ENCODE measurements at regions of chr18 and their contacts with region 1.

Region 1: GRCh38 chr18:34322365-34323289 is 97.9 kb upstream of the NOL4 start:
- ATAC-seq: peak in 4 of 8 experiments; percentile 27 to 63 (median 60)
- H3K4me3 ChIP-seq: no peak overlapping the region
- H3K27ac ChIP-seq: no peak overlapping the region
- H3K4me1 ChIP-seq: peaks cover 0 to 5% of the 10 kb centered on the region in 2 donors

Region 2: DNA sequence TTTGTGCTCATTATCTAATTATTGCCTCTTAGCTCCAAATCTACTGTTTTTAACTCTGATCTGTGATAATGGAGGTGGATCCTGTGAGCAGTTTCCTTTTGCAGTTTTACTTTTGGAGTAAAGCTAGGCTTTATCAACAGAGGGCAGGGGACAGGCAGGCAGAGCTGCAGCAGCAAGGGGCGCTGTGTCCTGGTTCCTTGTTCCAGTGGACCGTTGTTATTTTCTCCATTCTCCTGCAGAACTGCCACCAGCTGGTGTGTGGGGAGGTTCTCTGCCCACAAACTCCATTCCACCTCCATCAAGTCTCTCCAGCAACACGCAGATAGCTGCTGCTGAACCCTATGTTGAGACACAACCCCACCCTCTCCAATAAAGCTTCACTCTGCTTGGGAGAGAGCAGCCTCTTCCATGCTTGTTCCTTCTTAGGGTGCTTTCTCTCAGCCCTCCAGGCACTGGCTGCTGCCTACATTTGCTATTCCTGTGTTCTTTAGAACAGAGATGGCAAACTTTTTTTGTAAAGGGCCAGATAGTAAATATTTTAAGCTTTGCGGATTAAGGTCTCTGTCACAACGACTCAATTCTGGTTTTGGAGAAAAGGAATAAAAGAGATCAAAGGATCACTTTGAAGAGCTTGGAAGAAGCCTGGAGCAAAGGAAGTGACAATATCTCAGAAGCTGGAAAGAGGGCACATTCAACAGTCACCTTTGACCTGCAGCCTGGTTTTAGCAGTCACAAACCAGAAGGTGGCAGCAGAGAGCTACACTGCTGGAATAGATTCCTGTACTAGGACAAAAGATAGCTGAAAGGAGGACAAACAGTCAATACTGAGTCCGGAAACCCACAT is 1090.9 kb before region 1 on chr18:
- in situ Hi-C with region 1: loop called in 1 of 9 experiments (anchors 25 kb)
- ATAC-seq: peak; percentile 58 to 86 (median 79)
- H3K4me3 ChIP-seq: no peak overlapping the region
- H3K27ac ChIP-seq: no peak overlapping the region
- H3K4me1 ChIP-seq: peaks cover 0 to 3% of the 10 kb centered on the region in 2 donors

Region 3: GRCh38 chr18:33839441-33840211 is 483.0 kb before region 1 on chr18:
- in situ Hi-C with region 1: loop called in 1 of 9 experiments (anchors 25 kb)
- ATAC-seq: peak in 4 of 8 experiments; percentile 24 to 62 (median 34)
- H3K4me3 ChIP-seq: no peak overlapping the region
- H3K27ac ChIP-seq: no peak overlapping the region
- H3K4me1 ChIP-seq: no peaks in the 10 kb centered on the region

Region 4: DNA sequence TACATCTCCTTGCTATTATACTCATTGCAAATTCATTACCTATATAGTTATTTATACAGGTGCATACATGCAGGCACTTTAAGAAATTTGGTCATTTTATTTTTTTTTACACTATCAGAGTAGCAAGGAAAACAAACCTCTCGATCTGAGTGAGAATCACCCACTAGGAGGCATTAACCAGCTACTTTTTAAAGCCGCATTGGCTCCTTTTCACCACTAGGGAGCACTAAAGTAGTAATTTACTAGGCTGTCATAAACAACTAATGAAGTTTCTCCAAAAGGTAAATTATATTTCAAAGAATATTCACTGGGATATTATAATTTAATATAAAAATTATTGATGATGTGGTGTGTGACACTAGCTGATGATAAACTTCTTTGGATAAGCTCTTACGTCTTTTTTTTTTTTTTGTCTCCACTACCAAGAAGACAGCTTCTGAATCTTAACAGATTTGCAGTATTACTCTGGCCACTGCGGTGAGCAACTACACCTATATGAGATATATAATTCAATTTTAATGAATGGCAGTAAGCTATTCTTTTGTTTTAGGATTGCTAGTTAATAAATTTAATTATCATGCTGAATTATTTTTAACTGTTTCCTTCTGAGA is 199.8 kb before region 1 on chr18:
- in situ Hi-C with region 1: loop called in 3 of 9 experiments (anchors 10 to 25 kb)
- ATAC-seq: peak in 5 of 8 experiments; percentile 29 to 58 (median 36)
- H3K4me3 ChIP-seq: no peak overlapping the region
- H3K27ac ChIP-seq: no peak overlapping the region
- H3K4me1 ChIP-seq: no peaks in the 10 kb centered on the region

Region 5: DNA sequence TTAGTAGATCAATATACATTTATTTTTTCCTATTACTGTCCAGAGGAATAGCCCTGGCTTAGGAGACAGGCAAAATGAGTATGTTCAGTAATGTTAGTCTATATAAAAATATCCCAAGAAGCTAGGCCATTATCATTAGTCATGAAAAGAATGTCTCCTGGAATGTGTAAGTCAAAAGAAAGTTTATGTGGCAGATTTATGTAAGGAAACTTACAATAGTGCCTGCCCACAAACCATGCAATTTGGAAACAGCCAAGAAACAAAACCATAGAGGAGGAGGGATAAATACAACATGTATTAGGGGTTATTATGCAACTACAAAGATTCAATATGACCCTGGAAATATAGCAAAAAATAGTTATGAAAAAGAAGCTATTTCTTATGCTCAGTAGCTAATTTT is 194.2 kb before region 1 on chr18:
- in situ Hi-C with region 1: loop called in 3 of 9 experiments (anchors 10 to 25 kb)
- ATAC-seq: no peak
- H3K4me3 ChIP-seq: no peak overlapping the region
- H3K27ac ChIP-seq: no peak overlapping the region
- H3K4me1 ChIP-seq: no peaks in the 10 kb centered on the region

Region 6: DNA sequence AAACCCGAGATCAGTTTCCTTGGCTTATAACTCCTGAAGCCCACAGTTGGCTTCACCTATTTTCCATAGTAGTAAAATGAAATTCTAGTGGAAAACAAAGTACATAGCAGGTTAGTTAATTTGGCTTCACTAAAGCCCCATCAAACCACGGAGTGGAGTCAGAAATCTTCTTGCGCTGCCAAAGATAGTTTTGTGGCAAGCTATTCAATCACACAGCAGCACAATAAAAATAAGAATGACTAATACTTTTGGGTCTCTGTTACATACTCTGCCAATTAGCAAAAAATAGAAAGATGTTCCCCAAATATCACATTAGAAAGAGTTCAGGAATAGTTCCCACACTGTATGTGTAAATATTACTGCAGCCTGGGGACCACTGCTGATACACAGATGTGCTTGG is 77.3 kb after region 1 on chr18:
- in situ Hi-C with region 1: no loop called
- ATAC-seq: no peak
- H3K4me3 ChIP-seq: no peak overlapping the region
- H3K27ac ChIP-seq: no peak overlapping the region
- H3K4me1 ChIP-seq: no peaks in the 10 kb centered on the region

Region 7: DNA sequence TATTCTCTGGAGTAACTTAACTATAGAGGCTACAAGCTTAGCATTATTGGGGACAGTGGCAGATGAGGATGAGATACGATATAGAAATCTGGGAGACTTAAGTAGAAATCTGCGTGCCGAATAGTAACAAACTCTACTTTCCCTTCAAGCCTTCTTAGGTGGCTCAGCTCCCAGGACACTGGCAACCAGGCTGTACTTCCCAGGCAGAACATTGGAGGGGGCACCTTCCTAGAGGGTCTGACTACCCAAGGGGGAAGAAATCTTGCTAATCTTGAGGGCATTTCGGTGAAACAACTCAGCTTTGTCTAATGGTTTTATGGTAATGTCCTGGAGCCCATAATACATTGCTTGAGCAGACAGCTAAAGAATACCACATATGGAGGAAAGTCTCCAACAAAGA is 261.3 kb after region 1 on chr18:
- in situ Hi-C with region 1: no loop called
- ATAC-seq: no peak
- H3K4me3 ChIP-seq: no peak overlapping the region
- H3K27ac ChIP-seq: no peak overlapping the region
- H3K4me1 ChIP-seq: no peaks in the 10 kb centered on the region